IMR-90 (cell line): ENCODE measurements at regions of chr12 and their contacts with region 1.

Region 1: DNA sequence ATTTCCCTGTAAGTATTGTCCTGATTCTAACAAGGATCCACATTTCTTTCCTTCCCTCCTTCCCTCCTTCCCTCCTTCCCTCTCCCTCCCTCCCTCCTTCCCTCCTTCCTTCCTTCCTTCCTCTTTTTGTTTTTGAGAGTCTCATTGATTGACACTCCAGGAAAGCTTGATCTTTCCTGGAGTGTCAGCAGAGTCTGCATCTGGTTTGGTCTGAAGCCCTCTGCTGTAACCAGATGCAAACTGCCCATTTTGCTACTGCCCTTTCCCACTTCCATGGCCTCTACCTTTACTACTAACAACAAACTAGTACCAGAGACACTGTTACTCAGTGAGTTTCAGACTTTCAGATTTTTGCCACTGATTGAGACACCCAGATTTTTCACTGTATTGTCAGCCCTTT is 14.4 kb upstream of the OR6C65 start:
- DNase-seq: no peak
- ATAC-seq: no peak
- H3K4me3 ChIP-seq: no peak overlapping the region
- H3K27ac ChIP-seq: no peak overlapping the region
- H3K4me1 ChIP-seq: no peaks in the 10 kb centered on the region
- H3K27me3 ChIP-seq: no peaks in the 10 kb centered on the region
- CTCF ChIP-seq: no peak
- POLR2A ChIP-seq: no peak
- RAD21 ChIP-seq: no peak

Region 2: GRCh38 chr12:55246159-55246558 is 139.8 kb before region 1 on chr12:
- CTCF ChIA-PET with region 1: no interaction called
- POLR2A ChIA-PET with region 1: no interaction called
- dilution Hi-C with region 1: no loop called
- in situ Hi-C with region 1: no loop called
- intact Hi-C with region 1: loop called (anchors 10 kb)
- DNase-seq: no peak
- ATAC-seq: no peak
- H3K4me3 ChIP-seq: no peak overlapping the region
- H3K27ac ChIP-seq: no peak overlapping the region
- H3K4me1 ChIP-seq: no peaks in the 10 kb centered on the region
- H3K27me3 ChIP-seq: no peaks in the 10 kb centered on the region
- CTCF ChIP-seq: no peak
- POLR2A ChIP-seq: no peak
- RAD21 ChIP-seq: no peak